A549 (cell line): ENCODE measurements at regions of chr11 and their contacts with region 1.

Region 1: GRCh38 chr11:119334174-119334930 is at the start of gene RNF26:
- DNase-seq: peak; percentile 96 to 97
- ATAC-seq: peak; percentile 81 to 89
- H3K4me3 ChIP-seq: peak within 1 kb of the TSS; percentile 72
- H3K27ac ChIP-seq: peak within 1 kb of the TSS; percentile 79 to 94
- H3K4me1 ChIP-seq: peaks cover 19% of the 10 kb centered on the region
- CTCF ChIP-seq: no peak
- EP300 ChIP-seq: no peak
- POLR2A ChIP-seq: peak; percentile 53
- RAD21 ChIP-seq: no peak
- polyA plus RNA-seq, gene RNF26: 23.5 and 28.4 TPM in 2 replicates

Region 2: GRCh38 chr11:118705111-118705741 is 629.1 kb before region 1 on chr11:
- CTCF ChIA-PET with region 1: no interaction called
- POLR2A ChIA-PET with region 1: no interaction called
- DNase-seq: no peak
- ATAC-seq: no peak
- H3K4me3 ChIP-seq: no peak overlapping the region
- H3K27ac ChIP-seq: no peak overlapping the region
- H3K4me1 ChIP-seq: no peaks in the 10 kb centered on the region
- CTCF ChIP-seq: no peak
- EP300 ChIP-seq: no peak
- POLR2A ChIP-seq: no peak
- RAD21 ChIP-seq: no peak

Region 3: DNA sequence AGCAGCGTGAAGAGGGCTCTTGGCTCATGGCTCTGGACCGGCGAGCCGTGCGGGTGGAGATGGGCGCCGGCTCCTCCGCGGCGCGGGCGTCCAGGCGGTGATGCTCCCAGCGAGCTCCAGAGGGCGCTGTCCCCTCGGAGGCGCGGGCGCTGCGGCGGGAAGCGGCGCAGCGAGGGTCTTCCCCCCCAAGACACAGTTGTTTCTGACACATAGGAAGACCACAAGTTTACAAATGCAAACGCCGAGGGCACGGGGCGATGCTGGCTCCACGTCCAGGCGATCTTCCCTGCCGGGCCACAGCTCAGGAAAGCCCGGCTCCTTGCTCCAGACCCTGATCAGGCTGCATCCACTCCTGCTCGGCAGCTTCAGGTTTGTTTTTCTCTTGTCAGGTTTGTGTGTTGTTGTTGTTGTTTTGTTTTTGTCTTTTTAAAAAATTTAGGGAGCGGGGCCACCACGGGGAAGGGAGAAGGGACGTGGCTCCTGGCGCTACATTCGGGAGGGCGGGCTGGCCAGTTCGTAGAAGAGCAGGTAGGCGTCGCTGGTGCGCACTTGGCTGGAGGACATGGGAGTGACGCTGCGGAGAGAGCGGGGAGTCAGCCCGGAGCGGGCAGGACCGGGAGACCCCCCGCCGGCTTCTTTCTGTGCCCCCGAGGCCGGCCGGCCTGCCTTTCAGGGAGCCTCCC is 22.1 kb after region 1 on chr11:
- CTCF ChIA-PET with region 1: interaction called, 57 read pairs
- POLR2A ChIA-PET with region 1: no interaction called
- DNase-seq: peak; percentile 70 to 90
- ATAC-seq: peak; percentile 82 to 89
- H3K4me3 ChIP-seq: peak overlapping the region; percentile 57
- H3K27ac ChIP-seq: peak overlapping the region; percentile 78 to 87
- H3K4me1 ChIP-seq: peaks cover 30% of the 10 kb centered on the region
- CTCF ChIP-seq: peak; percentile 90
- EP300 ChIP-seq: no peak
- POLR2A ChIP-seq: no peak
- RAD21 ChIP-seq: peak; percentile 60 to 79

Region 4: DNA sequence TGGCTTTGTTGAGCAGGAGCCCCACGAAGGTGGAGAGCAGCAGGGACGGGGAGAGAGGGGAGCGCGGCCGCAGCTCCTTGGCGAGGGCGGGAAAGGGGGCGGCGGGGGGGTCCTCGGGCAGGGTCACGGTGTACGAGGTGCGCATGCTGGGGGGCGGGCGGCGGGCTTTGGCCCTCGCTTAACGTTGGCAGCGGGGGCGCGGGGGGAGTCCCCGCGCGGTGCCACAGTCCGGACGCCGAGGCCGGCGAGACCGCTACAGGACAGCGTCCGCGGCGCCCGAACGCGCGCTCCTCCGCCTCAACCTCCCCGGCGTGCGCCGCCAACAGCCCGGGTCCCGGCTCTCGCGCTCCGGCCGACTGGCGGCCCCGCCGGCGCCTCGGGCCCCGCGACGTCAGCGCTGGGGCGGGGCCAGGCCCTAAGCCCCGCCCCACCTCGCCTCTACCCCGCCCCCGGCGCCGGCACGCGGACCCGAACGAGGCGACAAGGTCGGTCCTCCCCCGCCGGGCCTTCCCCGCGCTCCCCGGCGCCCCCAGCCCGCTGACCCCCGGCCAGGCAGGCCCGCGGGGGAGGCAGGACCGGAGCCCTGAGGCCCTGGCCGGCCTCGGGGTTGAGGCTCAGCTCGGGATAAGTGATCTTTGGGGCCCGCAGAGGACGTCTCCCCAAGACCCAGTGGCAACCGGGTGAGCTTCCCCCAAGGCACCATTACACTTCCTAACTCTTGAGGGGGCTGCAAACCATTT is 29.7 kb after region 1 on chr11:
- CTCF ChIA-PET with region 1: interaction called, 123 read pairs
- POLR2A ChIA-PET with region 1: no interaction called
- DNase-seq: peak in 1 of 2 experiments; percentile 31
- ATAC-seq: peak in 1 of 2 experiments; percentile 49; a peak in 3 of 6 replicates
- H3K4me3 ChIP-seq: peak overlapping the region; percentile 50
- H3K27ac ChIP-seq: peak overlapping the region; percentile 74 to 91
- H3K4me1 ChIP-seq: peaks cover 73% of the 10 kb centered on the region
- CTCF ChIP-seq: no peak
- EP300 ChIP-seq: no peak
- POLR2A ChIP-seq: no peak
- RAD21 ChIP-seq: no peak